Activated CD8-positive, alpha-beta T cell treated with anti-CD3 and anti-CD28 coated beads for 36 hours (primary cell): ENCODE measurements at regions of chr2 and their contacts with region 1.

Region 1: DNA sequence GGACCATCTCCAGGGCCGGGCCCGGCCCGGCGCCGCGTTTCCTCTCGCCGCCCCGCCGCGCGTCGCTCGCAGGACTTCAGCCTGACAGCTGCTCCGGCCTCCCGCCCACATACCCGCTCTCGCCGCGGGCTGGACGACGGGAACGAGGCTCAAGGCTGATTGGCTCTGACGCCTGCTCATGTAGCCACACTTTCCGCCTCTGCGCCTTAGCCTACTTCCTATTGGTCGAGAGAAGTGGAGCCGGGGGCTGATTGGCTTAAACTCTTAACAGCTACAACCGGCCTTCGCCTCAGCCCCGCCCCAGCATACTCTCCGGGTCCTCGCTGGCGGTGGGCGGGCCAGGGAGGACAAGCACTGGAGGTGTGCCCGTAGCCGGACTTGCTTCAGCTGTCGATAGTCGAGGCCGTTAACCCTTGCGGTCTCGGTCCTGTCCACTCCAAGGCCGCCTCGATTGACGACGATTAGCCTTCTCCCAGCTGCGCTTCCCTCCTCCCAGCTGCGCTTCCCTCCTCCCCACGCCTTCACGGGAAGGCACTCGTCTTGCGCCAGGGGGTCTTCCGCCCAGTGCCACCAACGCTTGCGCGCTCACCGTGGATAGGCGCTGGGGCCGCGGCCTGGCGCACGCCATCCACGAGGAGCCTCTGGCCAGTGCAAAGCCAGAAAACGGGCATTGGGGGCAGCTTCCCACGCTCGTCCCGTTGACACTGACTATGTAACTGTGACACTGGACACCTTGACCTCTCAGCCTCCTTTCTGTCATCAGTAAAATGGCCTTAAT is at the start of gene PRADC1:
- DNase-seq: peak; percentile 98
- ATAC-seq: peak; percentile 90
- H3K4me3 Mint-ChIP-seq: peak within 1 kb of the TSS; percentile 99
- H3K27ac Mint-ChIP-seq: peak within 1 kb of the TSS; percentile 95
- H3K4me1 Mint-ChIP-seq: peaks cover 29% of the 10 kb centered on the region
- H3K27me3 Mint-ChIP-seq: no peaks in the 10 kb centered on the region
- CTCF ChIP-seq: no peak
- total RNA-seq, gene PRADC1: 12.4 to 16.2 TPM

Region 2: GRCh38 chr2:73131807-73132206 is 101.5 kb before region 1 on chr2:
- CTCF ChIA-PET with region 1: no interaction called
- POLR2A ChIA-PET with region 1: no interaction called
- intact Hi-C with region 1: no loop called
- DNase-seq: no peak
- ATAC-seq: no peak
- H3K4me3 Mint-ChIP-seq: no peak overlapping the region
- H3K27ac Mint-ChIP-seq: no peak overlapping the region
- H3K4me1 Mint-ChIP-seq: no peaks in the 10 kb centered on the region
- H3K27me3 Mint-ChIP-seq: peaks cover 2% of the 10 kb centered on the region
- CTCF ChIP-seq: no peak

Region 3: GRCh38 chr2:73212448-73213176 is 20.7 kb before region 1 on chr2:
- CTCF ChIA-PET with region 1: interaction called, 53 read pairs
- POLR2A ChIA-PET with region 1: interaction called, 108 read pairs
- intact Hi-C with region 1: no loop called
- DNase-seq: peak; percentile 89
- ATAC-seq: peak; percentile 78
- H3K4me3 Mint-ChIP-seq: peak overlapping the region; percentile 33
- H3K27ac Mint-ChIP-seq: no peak overlapping the region
- H3K4me1 Mint-ChIP-seq: peaks cover 29% of the 10 kb centered on the region
- H3K27me3 Mint-ChIP-seq: no peaks in the 10 kb centered on the region
- CTCF ChIP-seq: peak; percentile 90

Region 4: GRCh38 chr2:73243884-73244570 is 10.7 kb after region 1 on chr2:
- CTCF ChIA-PET with region 1: interaction called, 10 read pairs
- POLR2A ChIA-PET with region 1: interaction called, 97 read pairs
- intact Hi-C with region 1: no loop called
- DNase-seq: no peak
- ATAC-seq: no peak
- H3K4me3 Mint-ChIP-seq: no peak overlapping the region
- H3K27ac Mint-ChIP-seq: peak overlapping the region; percentile 74
- H3K4me1 Mint-ChIP-seq: peaks cover 25% of the 10 kb centered on the region
- H3K27me3 Mint-ChIP-seq: no peaks in the 10 kb centered on the region
- CTCF ChIP-seq: no peak

Region 5: DNA sequence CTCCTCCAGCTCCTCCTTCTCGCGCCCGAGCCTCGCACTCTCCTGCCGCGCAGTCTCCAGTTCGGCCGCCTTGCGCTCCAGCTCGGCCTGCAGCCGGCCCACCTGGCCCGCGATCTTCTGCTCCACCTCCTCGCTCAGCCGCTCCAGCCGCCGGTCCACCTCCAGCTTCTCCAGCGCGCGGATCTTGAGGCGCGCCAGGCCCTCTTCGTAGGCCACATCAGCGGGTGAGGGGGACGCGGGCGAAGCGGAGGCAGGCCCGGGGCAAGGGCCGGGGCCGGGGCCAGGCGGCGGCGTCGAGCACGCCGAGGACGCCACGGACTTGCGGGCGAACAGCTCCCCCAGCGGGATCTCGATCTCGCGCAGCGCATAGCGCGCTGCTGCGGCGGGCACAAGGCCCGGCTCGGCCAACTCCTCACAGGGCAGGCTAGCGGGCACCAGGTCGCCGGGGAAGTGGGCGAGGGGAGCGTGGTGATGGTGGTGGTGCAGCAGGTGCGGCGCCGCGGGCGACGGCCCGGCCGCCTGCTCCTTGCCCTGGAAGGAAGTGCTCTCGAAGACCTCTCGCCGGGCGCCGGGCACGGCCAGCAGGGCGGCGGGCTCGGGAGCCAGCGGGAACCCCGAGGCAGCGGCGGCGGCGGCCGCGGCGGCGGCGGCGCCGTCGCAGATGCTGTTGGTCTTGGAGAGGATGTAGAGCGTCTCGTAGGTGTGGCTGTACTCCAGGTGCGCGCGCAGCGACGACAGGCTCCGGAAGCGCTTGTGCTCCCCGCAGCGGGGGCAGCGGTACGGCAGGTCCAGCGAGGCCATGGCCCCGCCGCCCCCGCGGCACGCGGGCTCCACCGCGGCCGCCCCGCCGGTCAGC is 35.7 kb after region 1 on chr2:
- CTCF ChIA-PET with region 1: no interaction called
- POLR2A ChIA-PET with region 1: interaction called, 12 read pairs
- intact Hi-C with region 1: no loop called
- DNase-seq: peak; percentile 84
- ATAC-seq: peak; percentile 96
- H3K4me3 Mint-ChIP-seq: peak overlapping the region; percentile 28
- H3K27ac Mint-ChIP-seq: no peak overlapping the region
- H3K4me1 Mint-ChIP-seq: peaks cover 26% of the 10 kb centered on the region
- H3K27me3 Mint-ChIP-seq: no peaks in the 10 kb centered on the region
- CTCF ChIP-seq: no peak

Region 6: DNA sequence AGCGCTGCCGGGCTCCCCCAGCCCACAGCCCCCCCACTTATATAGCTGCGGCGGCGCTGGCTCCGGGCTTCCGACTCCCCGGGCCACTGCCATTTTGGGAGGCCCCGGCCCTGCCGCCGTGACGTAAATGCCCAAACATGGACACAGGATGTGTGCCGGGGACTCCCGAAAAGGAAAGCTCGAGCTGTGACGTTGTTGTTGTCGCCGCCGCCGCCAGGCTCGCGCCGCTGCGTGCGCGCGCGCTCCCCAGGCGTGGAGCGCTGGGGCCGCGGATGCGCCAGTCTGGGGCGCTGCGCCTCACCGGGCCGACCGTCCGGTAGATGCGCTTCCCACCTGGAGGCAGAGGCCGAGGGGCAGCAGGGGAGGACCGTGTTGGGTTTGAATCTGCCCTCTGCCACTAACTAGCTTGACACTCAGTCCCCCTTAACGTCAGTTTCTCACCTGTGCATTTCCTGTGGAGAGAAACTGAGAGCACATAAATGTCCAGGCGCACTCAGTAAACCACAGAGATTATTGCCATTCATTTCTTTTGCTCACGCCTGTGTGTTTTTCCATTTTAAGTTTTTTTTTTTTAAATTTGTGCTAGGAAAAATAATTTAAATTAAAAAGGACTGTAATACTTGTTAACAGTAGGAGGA is 60.3 kb after region 1 on chr2 and contains the start of gene EGR4:
- CTCF ChIA-PET with region 1: interaction called, 28 read pairs
- POLR2A ChIA-PET with region 1: interaction called, 6 read pairs
- intact Hi-C with region 1: loop called (anchors 5 kb)
- DNase-seq: peak; percentile 95
- ATAC-seq: peak; percentile 93
- H3K4me3 Mint-ChIP-seq: peak within 1 kb of the TSS; percentile 70
- H3K27ac Mint-ChIP-seq: no peak within 1 kb of the TSS
- H3K4me1 Mint-ChIP-seq: peaks cover 11% of the 10 kb centered on the region
- H3K27me3 Mint-ChIP-seq: peaks cover 63% of the 10 kb centered on the region
- CTCF ChIP-seq: no peak
- total RNA-seq, gene EGR4: 0.11 to 0.29 TPM

Region 7: DNA sequence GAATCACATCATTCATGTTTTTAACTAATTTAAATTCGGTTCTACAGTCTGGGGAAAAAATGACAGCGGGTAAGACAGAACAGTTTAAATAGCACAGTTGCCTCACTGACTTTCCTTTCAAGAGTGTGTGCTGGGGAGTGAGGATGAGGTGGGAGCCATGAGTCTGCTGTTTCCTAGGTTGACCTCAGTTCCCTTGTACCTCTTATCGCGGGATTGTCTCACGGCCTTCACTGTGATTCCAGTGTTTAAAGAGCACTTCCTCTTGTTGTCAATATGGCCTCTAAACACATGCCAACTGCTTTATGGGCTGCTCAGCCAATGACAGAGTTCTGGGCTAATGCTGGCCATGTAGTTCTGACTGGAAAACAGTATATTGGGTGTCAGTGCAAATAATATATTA is 110.6 kb after region 1 on chr2:
- CTCF ChIA-PET with region 1: no interaction called
- POLR2A ChIA-PET with region 1: no interaction called
- intact Hi-C with region 1: no loop called
- DNase-seq: no peak
- ATAC-seq: no peak
- H3K4me3 Mint-ChIP-seq: no peak overlapping the region
- H3K27ac Mint-ChIP-seq: no peak overlapping the region
- H3K4me1 Mint-ChIP-seq: no peaks in the 10 kb centered on the region
- H3K27me3 Mint-ChIP-seq: peaks cover 2% of the 10 kb centered on the region
- CTCF ChIP-seq: no peak